Heart left ventricle (tissue), 16 donors: ENCODE measurements at regions of chr15 and their contacts with region 1.

Region 1: GRCh38 chr15:79004336-79004735 is 59.5 kb upstream of the CTSH start:
- DNase-seq: peak in 3 of 5 donors; percentile 26 to 56 (median 48)
- ATAC-seq: peak; percentile 37 to 84 (median 65)
- H3K4me3 ChIP-seq: no peak overlapping the region
- H3K27ac ChIP-seq: no peak overlapping the region
- H3K4me1 ChIP-seq: peaks cover 0 to 24% (median 4%) of the 10 kb centered on the region in 12 donors
- H3K27me3 ChIP-seq: no peaks in the 10 kb centered on the region
- CTCF ChIP-seq: no peak
- POLR2A ChIP-seq: no peak

Region 2: DNA sequence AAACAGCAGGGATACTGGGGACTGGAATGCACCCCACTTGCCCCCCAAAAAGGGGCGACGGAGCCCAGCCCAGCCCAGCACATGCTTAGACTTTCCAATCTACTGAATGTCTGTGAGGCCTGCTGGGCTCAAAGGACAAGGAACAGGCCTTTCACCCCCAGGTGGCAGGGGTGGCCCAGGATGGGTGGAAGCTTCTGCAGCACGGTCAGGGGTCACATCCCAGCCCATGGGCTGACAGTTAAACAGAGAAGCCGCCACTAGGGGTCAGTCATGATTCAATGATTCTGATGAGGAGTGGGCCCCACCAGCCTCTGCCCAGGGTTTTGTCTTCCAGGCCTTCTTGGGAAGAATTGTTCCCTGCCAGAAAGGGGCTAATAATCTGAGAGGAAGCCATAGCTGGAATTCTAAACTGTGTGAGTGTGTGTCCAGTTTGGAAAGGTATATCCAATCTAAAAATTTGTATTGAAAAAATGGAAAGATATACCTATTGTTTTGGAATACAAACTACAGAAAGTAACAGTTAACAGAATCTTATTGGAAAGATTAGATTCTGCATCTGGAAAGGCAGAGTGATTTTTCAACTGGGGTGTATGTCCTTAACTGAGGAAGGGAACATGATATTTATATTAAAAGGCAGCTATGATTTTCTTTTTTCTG is 365.6 kb before region 1 on chr15:
- intact Hi-C with region 1: loop called in 1 of 10 experiments (anchors 10 kb)
- DNase-seq: peak in 3 of 5 donors; percentile 42 to 48 (median 47)
- ATAC-seq: peak in 3 of 4 donors; percentile 56 to 73 (median 70)
- H3K4me3 ChIP-seq: no peak overlapping the region
- H3K27ac ChIP-seq: no peak overlapping the region
- H3K4me1 ChIP-seq: peaks cover 0 to 16% (median 6%) of the 10 kb centered on the region in 12 donors
- H3K27me3 ChIP-seq: peaks cover 0 to 15% (median 6%) of the 10 kb centered on the region in 9 donors
- CTCF ChIP-seq: peak; percentile 48 to 76 (median 61)
- POLR2A ChIP-seq: no peak

Region 3: DNA sequence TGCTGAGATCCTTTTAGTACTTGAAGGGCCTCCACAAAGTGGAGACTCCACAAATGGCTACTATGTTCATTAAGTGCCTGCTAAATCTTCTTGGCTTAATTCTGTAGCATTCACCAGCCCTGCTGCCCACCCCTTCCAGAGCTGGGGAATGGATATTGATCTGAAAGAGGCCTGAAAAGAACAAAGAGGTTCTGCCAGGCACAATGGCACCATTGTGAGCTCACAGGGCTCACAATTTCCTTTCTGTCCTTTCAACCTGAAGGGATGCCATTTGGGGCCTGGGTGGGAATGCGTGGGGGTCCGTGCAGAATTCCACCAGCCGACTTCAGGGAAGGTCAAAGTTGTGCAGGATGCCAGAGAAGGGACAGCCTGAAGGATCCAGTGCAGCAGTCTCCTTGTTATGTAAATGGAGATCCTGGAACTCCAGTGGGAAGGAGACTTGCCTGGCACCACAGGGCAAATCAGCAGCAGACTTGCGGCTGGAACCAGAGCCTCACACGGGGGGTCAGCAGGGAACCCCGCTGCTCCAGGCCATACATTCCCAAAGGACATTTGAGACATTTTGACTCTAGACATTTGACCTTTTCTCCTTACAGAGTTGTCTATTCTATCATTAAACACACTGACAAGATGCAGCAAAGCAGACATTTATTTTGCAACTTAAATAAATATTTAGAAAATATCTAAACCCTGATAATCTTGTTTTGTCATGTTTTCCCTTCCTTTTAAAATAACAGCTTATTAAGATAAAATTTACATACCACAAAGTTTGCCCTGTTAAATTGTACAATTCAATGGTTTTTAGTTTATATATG is 153.2 kb before region 1 on chr15:
- intact Hi-C with region 1: no loop called
- DNase-seq: no peak
- ATAC-seq: no peak
- H3K4me3 ChIP-seq: no peak overlapping the region
- H3K27ac ChIP-seq: no peak overlapping the region
- H3K4me1 ChIP-seq: no peaks in the 10 kb centered on the region
- H3K27me3 ChIP-seq: no peaks in the 10 kb centered on the region
- CTCF ChIP-seq: no peak
- POLR2A ChIP-seq: no peak

Region 4: GRCh38 chr15:78909791-78910228 is 94.5 kb before region 1 on chr15:
- intact Hi-C with region 1: loop called in 1 of 10 experiments (anchors 2 kb)
- DNase-seq: peak in 1 of 5 donors; percentile 23
- ATAC-seq: peak in 3 of 4 donors; percentile 33 to 50 (median 42)
- H3K4me3 ChIP-seq: no peak overlapping the region
- H3K27ac ChIP-seq: no peak overlapping the region
- H3K4me1 ChIP-seq: peaks cover 0 to 59% (median 41%) of the 10 kb centered on the region in 12 donors
- H3K27me3 ChIP-seq: no peaks in the 10 kb centered on the region
- CTCF ChIP-seq: peak; percentile 54 to 74 (median 67)
- POLR2A ChIP-seq: no peak

Region 5: DNA sequence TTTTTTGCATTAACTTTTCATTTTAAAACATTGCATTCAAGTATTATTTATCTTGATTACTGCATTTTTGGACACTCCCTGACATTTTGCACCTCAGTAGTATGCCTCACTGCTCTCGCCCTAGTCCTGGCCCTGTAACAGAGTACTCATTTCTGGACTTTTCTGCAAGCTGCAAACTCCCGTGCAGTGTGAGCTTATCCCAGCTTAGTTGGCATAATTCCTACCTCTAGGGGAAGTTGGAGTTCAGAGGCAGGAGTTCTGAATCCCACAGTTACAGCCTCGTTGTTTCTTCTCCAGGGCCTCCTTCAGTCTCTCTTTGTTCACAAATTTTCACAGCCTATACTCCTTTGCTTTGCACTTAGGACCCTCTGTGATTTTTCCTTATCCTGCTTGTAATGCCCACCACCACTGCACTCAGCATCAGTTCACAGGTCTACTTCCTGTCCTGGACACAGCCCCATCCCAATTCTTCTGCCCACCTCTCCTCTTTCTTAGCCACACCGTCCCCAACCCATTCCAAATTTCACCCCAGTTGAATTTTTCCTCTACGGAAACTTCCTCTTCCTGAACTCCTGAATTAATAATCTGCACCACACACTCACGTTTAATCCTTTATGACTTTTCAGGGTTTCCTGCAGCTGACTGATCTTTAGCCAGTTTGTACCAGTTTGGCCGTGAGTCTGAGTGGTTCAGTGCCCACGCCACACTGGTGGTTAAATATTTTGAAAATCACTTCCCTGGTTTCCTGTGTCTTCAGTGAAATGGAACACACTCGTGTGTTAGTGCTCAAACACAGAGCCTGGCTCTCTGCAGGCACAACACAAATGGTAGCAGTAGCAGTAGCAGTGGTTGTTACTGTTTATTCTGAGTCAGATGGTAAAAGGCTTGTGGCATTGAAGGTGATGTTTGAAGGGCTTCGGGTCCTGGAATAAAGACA is 53.2 kb before region 1 on chr15:
- intact Hi-C with region 1: loop called in 1 of 10 experiments (anchors 10 kb)
- DNase-seq: no peak
- ATAC-seq: peak; percentile 34 to 69 (median 50)
- H3K4me3 ChIP-seq: no peak overlapping the region
- H3K27ac ChIP-seq: peak overlapping the region in 8 of 12 donors; percentile 17 to 61 (median 48)
- H3K4me1 ChIP-seq: peaks cover 0 to 26% (median 15%) of the 10 kb centered on the region in 12 donors
- H3K27me3 ChIP-seq: no peaks in the 10 kb centered on the region
- CTCF ChIP-seq: peak in 5 of 12 donors; percentile 10 to 32 (median 22)
- POLR2A ChIP-seq: no peak

Region 6: DNA sequence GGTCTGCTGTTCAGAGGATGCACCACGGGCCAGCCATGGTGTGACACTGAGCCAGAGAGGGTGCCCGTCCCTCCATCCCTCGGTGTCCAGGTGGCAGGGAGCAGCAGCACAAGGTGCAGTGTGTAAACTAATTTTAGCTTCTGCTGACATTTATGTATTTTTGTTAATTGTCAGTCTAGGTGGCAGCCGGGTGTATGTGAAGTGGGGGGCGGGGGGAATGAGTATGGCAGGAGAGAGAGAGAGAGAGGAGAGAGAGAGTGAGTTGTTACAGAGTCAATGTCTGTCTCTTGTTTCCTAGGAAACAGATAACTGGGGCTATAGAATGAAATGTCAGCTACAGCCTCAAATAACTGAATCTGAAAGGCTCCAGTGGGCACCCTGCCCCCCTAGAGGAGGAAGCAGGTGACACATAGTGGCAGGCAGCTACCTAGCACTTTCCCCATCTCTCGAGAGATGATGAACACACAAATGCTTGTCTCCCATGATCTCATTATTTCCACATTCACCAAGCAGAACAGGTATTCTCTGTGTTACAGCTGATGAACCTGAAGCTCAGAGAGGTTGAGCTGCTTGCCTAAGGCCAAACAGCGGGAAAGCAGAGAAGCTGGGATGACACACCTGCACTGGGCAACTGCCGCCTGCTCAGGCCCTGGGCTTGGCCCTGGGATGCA is 61.5 kb after region 1 on chr15:
- intact Hi-C with region 1: no loop called
- DNase-seq: no peak
- ATAC-seq: no peak
- H3K4me3 ChIP-seq: no peak overlapping the region
- H3K27ac ChIP-seq: peak overlapping the region in 1 of 12 donors; percentile 79
- H3K4me1 ChIP-seq: no peaks in the 10 kb centered on the region
- H3K27me3 ChIP-seq: peaks cover 0 to 4% (median 0%) of the 10 kb centered on the region in 9 donors
- CTCF ChIP-seq: no peak
- POLR2A ChIP-seq: no peak